Endothelial cell of umbilical vein (primary cell): ENCODE measurements at regions of chr6 and their contacts with region 1.

Region 1: GRCh38 chr6:29992807-29993206 is 50.5 kb downstream of the HLA-A start:
- DNase-seq: no peak
- H3K4me3 ChIP-seq: no peak overlapping the region
- H3K27ac ChIP-seq: no peak overlapping the region
- H3K4me1 ChIP-seq: peaks cover 2% of the 10 kb centered on the region
- H3K27me3 ChIP-seq: peaks cover 4 to 15% of the 10 kb centered on the region in 2 experiments
- CTCF ChIP-seq: no peak
- POLR2A ChIP-seq: no peak

Region 2: DNA sequence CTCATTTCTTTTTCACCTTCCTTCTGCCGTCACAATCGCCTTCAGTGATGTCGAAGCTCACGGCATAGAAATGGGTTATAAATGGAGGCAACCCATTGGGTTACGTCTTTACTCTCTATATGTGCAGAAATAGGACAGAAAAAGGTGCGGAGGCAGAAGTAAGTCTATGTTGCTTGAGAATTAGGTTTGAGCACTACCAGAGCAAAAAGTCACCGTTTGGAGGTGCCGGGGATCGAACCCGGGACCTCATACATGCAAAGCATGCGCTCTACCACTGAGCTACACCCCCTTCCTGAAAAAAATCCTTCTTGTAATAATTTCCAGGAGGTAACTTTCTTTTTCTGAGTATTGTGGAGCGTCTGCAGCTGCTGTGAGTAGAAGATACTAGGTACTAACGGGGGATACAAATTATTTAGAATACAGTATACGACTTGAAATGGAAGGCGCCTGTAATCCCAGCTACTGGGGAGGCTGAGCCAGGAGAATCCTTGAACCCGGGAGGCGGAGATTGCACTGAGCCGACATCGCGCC is 1203.2 kb before region 1 on chr6:
- CTCF ChIA-PET with region 1: no interaction called
- POLR2A ChIA-PET with region 1: no interaction called
- dilution Hi-C with region 1: no loop called
- intact Hi-C with region 1: no loop called
- DNase-seq: peak; percentile 49
- H3K4me3 ChIP-seq: peak overlapping the region; percentile 5 to 65 (median 57)
- H3K27ac ChIP-seq: no peak overlapping the region
- H3K4me1 ChIP-seq: peaks cover under 1% of the 10 kb centered on the region
- H3K27me3 ChIP-seq: peaks cover 37 to 56% of the 10 kb centered on the region in 2 experiments
- CTCF ChIP-seq: no peak
- POLR2A ChIP-seq: no peak

Region 3: DNA sequence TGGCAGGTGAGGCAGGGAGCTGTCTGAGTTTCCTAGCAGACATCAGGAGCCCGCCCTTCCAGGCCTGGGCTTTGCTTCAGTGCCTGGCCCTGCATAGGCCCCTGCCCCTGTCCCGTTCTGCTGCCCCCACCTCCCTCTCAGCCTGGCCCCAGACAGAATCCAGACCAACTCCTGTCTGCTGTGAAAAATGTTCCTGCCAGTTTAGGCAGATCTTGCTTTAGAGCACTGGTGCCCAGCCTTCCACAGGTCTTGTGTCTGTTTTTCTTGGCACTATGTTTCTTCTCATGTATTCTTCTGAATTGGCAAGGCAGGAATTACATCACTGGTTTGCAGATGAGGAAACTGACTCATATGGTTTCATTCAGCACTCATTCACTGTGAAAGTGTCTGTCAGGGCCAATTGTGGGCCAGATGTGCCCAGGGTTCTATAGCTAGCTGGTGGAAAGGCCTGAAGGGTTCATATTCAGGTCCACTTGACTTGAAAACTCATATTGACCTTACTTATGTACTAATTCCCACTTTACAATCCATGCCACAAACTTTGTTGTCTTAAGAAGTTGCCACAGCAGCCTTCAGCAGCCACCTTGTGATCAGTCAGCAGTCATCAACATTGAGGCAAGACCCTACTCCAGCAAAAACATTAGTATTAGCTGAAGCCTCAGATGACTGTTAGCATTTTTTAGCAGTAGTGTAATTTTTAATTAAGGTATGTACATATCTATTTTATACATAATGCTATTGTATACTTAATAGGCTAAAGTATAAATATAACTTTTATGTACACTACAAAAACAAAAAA is 229.1 kb before region 1 on chr6:
- CTCF ChIA-PET with region 1: no interaction called
- POLR2A ChIA-PET with region 1: no interaction called
- dilution Hi-C with region 1: no loop called
- intact Hi-C with region 1: loop called (anchors 2 kb)
- DNase-seq: peak; percentile 95
- H3K4me3 ChIP-seq: no peak overlapping the region
- H3K27ac ChIP-seq: peak overlapping the region; percentile 93
- H3K4me1 ChIP-seq: peaks cover 29% of the 10 kb centered on the region
- H3K27me3 ChIP-seq: peaks cover 0 to 4% of the 10 kb centered on the region in 2 experiments
- CTCF ChIP-seq: no peak
- POLR2A ChIP-seq: no peak